WTC11 (cell line): ENCODE measurements at regions of chr5 and their contacts with region 1.

Region 1: DNA sequence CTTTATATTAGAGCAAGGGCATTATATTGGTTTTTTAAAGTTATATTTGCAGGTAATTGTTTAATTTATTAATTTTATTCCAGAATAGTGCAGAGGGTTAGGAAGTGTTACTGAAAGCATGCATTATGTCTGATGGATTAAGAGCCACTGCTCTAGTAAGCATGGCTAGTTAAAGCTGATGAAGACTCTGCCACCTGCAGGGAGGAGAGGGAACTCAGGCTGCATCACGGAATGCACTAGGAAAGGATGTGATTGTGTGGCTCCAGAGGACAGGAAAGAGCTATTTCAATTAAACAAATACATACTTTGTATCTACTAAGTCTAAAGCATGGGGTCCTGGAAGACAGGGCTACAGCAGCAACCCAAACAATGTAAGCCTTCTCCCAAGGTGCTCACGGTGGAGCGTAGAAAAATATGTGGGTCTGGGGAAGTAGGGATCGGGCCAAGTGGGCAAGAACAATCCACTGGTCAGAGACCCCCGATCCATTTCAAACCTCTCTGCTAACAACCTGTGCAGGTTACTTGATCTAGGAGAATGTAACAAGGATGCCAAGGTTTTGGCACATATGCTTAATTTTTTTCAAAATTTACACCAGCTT is 15.3 kb upstream of the GRXCR2 start:
- DNase-seq: peak; percentile 63
- ATAC-seq: peak; percentile 100
- H3K4me3 Mint-ChIP-seq: no peak overlapping the region
- H3K27ac Mint-ChIP-seq: no peak overlapping the region
- H3K4me1 Mint-ChIP-seq: no peaks in the 10 kb centered on the region
- H3K27me3 Mint-ChIP-seq: 0 out of 2 replicates have a peak, but pooled peaks cover 3% of the 10 kb centered on the region
- CTCF ChIP-seq: no peak

Region 2: GRCh38 chr5:145811834-145812625 is 76.0 kb before region 1 on chr5:
- CTCF ChIA-PET with region 1: interaction called, 17 read pairs
- POLR2A ChIA-PET with region 1: no interaction called
- DNase-seq: no peak
- ATAC-seq: peak; percentile 94
- H3K4me3 Mint-ChIP-seq: no peak overlapping the region
- H3K27ac Mint-ChIP-seq: no peak overlapping the region; the same call in 1 of the 2 replicates
- H3K4me1 Mint-ChIP-seq: peaks cover 4% of the 10 kb centered on the region; the same call in 1 of the 2 replicates
- H3K27me3 Mint-ChIP-seq: no peaks in the 10 kb centered on the region
- CTCF ChIP-seq: no peak

Region 3: DNA sequence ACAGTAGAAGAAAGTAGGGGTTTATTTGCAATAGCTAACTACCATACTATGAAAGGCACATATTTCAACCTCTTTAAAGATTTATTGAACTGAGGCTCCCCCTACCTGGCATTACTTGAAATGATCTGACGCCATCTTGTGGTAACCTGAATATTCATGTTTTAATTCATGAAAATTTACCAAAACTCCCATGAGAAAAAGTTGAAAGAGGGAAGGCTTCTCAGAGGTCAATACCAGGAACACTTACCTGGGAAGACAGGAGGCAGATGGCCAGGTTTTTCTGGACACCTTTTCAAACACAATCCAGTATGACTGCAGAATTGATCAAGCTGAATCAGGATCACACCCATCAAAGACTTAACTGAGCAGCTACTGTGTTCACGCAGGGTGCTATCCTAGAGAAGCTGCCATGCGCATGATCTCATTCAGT is 62.3 kb before region 1 on chr5:
- CTCF ChIA-PET with region 1: interaction called, 16 read pairs
- POLR2A ChIA-PET with region 1: no interaction called
- DNase-seq: no peak
- ATAC-seq: peak; percentile 76
- H3K4me3 Mint-ChIP-seq: no peak overlapping the region
- H3K27ac Mint-ChIP-seq: no peak overlapping the region
- H3K4me1 Mint-ChIP-seq: 0 out of 2 replicates have a peak, but pooled peaks cover 6% of the 10 kb centered on the region
- H3K27me3 Mint-ChIP-seq: no peaks in the 10 kb centered on the region
- CTCF ChIP-seq: no peak

Region 4: DNA sequence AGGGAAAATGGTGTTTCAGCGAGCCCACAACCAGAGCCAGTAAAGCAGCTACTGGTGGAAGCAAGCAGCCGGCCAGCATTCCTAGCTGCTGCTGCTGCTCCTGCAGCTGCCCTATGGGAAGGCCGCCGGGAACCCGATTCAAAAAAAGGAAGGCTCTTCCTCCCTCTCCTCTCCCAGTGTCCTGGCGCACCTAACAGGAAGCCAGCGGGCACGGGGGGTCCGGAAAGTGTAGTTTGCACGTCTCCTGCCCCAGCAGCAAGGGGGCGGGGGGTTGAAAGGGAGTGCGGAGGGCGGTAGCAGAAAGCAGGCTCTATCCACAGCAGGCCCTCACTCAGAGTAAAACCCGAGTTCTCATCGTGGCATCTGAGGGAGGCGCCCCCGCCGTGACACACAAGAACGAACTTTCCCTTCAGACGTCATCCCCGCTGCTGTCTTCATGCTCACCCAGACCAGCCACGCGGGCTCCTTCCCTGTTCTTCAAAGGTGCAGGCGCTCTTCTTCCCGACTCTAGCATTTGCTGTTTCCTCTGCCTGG is 31.7 kb before region 1 on chr5:
- CTCF ChIA-PET with region 1: interaction called, 11 read pairs
- POLR2A ChIA-PET with region 1: no interaction called
- DNase-seq: peak; percentile 73
- ATAC-seq: peak; percentile 90
- H3K4me3 Mint-ChIP-seq: peak overlapping the region; percentile 73
- H3K27ac Mint-ChIP-seq: peak overlapping the region; percentile 89
- H3K4me1 Mint-ChIP-seq: peaks cover 24% of the 10 kb centered on the region
- H3K27me3 Mint-ChIP-seq: no peaks in the 10 kb centered on the region
- CTCF ChIP-seq: no peak

Region 5: DNA sequence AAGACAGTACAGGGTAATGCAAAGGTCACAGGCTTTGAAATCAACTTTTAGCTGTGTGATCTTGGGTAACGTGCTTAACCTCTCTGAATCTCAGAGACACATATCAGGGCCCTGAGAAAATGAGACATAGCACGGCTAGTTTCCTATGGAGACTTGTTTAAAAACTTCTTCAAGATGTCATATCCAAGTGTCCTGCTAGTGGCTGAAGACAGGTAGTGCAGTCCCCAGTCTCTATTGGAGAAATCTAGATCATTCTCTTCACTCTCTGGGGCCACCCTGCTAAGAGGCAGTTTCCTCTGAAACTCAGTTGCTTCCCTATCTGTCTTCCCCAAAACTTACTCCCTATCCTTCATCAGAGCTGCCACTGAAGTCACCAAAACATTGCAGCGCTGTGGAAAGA is 15.0 kb after region 1 on chr5:
- CTCF ChIA-PET with region 1: interaction called, 15 read pairs
- POLR2A ChIA-PET with region 1: no interaction called
- DNase-seq: no peak
- ATAC-seq: peak; percentile 80
- H3K4me3 Mint-ChIP-seq: no peak overlapping the region
- H3K27ac Mint-ChIP-seq: no peak overlapping the region
- H3K4me1 Mint-ChIP-seq: peaks cover 10% of the 10 kb centered on the region
- H3K27me3 Mint-ChIP-seq: peaks cover 2% of the 10 kb centered on the region; the same call in 1 of the 2 replicates
- CTCF ChIP-seq: no peak

Region 6: GRCh38 chr5:145981589-145982491 is 93.8 kb after region 1 on chr5:
- CTCF ChIA-PET with region 1: interaction called, 12 read pairs
- POLR2A ChIA-PET with region 1: no interaction called
- DNase-seq: no peak
- ATAC-seq: no peak
- H3K4me3 Mint-ChIP-seq: no peak overlapping the region
- H3K27ac Mint-ChIP-seq: no peak overlapping the region
- H3K4me1 Mint-ChIP-seq: peaks cover 9% of the 10 kb centered on the region
- H3K27me3 Mint-ChIP-seq: 0 out of 2 replicates have a peak, but pooled peaks cover 2% of the 10 kb centered on the region
- CTCF ChIP-seq: no peak

Region 7: DNA sequence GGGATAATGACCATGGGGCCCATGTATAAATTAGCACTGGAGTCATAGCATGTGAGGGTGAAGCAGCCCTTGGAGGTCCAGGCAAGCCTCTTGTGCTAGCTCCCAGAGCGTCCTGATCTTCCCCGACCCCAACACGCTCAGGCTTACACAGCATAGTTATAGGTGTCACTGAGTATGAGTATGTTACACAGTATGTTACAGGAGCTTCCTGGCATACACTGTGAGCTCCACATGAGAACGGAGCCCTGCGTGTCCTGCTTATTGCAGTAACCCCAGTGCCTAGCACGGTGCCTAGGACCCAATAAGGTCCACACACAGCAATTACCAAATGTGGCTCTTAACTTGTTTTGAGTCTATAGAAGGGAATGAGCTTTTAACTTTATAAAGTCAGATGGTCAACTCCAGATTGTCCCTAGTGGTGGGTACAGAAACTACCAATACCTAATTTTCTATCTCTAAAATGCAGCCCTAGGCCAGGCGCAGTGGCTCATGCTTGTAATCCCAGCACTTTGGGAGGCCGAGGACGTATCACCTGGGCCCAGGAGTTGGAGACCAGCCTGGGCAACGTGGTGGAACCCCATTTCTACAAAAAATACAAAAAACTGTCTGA is 153.2 kb after region 1 on chr5:
- CTCF ChIA-PET with region 1: interaction called, 18 read pairs
- POLR2A ChIA-PET with region 1: no interaction called
- DNase-seq: no peak
- ATAC-seq: peak; percentile 90
- H3K4me3 Mint-ChIP-seq: no peak overlapping the region
- H3K27ac Mint-ChIP-seq: no peak overlapping the region
- H3K4me1 Mint-ChIP-seq: peaks cover 6% of the 10 kb centered on the region
- H3K27me3 Mint-ChIP-seq: no peaks in the 10 kb centered on the region
- CTCF ChIP-seq: no peak

Region 8: DNA sequence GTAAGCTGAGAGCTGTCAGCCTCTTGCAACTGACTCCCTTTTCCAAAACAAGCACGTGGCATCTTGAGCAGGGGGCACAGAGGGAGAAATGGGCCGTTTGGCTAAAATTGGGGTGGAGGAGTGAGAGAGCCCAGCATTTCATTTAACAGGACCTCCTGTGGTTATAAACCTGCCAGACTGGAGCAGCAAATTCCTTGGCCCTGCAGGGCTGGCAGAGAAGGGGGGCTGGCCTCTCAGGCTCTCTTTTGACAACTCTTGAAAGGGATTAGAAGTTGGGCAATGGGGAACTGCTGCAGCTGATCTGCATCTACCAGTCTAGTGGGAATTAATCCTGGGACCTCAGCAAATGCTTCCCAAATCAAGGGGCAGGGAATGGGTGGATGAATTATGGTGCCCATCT is 443.3 kb after region 1 on chr5:
- CTCF ChIA-PET with region 1: no interaction called
- POLR2A ChIA-PET with region 1: no interaction called
- DNase-seq: peak; percentile 48
- ATAC-seq: peak; percentile 73
- H3K4me3 Mint-ChIP-seq: no peak overlapping the region; the same call in 1 of the 2 replicates
- H3K27ac Mint-ChIP-seq: no peak overlapping the region
- H3K4me1 Mint-ChIP-seq: peaks cover 23% of the 10 kb centered on the region
- H3K27me3 Mint-ChIP-seq: peaks cover 74% of the 10 kb centered on the region
- CTCF ChIP-seq: no peak